Cardiac septum (tissue), 1 donor: ENCODE measurements at regions of chr1 and their contacts with region 1.

Region 1: GRCh38 chr1:86833461-86834215 is 80.3 kb downstream of the SELENOF start:
- DNase-seq: no peak

Region 2: GRCh38 chr1:86798608-86799291 is 34.9 kb before region 1 on chr1:
- intact Hi-C with region 1: no loop called
- DNase-seq: no peak

Region 3: GRCh38 chr1:86913896-86914634 is 80.4 kb after region 1 on chr1 and contains the start of gene SELENOF:
- intact Hi-C with region 1: no loop called
- DNase-seq: peak; percentile 97
- total RNA-seq, gene SELENOF: 80.7 TPM

Region 4: GRCh38 chr1:86926883-86927282 is 93.2 kb after region 1 on chr1:
- intact Hi-C with region 1: no loop called
- DNase-seq: no peak

Region 5: DNA sequence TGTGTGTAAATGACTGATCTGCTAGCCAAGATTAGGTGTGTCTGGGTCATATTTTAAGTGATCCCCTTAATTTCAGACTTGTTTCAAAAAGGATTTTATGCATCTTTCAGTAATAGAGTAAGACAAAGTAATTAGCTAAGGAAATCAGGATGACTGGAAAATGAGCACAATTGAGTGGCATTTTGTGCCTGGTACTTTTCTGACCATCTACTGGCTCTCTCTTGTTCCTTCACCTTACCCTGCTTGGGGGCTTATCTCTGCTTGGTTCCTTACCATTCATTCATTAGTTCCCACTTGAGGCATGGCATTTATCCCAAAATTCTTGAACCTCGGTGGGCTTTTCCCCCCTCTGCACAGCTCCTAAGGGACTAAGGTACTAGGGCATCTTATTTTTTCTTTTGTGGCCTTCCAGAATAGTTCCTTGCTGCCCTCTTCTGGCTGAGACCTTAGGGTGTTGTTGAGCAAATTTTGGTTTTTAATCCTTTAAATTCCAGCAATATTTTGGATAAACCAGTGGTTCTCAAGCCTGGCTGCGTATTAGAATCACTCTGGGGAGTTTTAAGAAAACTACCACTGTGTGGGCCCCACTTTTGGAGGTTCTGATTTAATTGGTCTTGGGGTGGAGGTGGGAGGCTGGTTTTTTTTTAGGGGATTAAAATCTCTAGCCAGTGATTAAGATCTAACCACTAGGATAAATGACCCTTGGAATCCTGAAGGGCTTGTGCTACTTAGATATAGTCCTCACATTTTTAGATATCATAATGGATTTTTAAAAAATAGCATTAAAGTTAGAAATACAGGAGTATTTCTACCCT is 131.6 kb after region 1 on chr1:
- intact Hi-C with region 1: loop called (anchors 1 kb)
- DNase-seq: no peak

Region 6: GRCh38 chr1:87115317-87115890 is 281.8 kb after region 1 on chr1:
- intact Hi-C with region 1: no loop called
- DNase-seq: no peak